Right cardiac atrium (tissue), 5 donors: ENCODE measurements at regions of chr13 and their contacts with region 1.

Region 1: DNA sequence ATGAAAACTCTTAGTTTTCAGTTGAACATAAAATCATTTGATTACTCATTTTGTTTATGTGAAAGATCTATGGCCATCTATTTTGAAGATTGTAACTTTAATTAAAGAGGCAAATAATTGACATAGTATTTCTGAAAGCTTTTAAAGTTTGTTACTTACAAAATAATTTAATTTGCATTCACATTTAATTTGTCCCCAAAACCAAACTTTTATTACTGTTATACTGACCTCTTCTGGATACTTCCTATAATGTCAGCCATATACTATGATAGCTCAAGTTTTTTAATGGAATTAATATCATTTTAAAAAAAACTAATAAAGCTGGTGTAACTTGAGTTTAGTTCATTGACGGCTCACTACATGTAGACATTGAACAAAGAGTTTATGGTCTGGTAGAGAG is 4.9 kb upstream of the SGCG start:
- DNase-seq: no peak
- ATAC-seq: no peak
- H3K4me3 ChIP-seq: no peak overlapping the region
- H3K27ac ChIP-seq: no peak overlapping the region
- H3K4me1 ChIP-seq: no peaks in the 10 kb centered on the region
- H3K27me3 ChIP-seq: no peaks in the 10 kb centered on the region

Region 2: GRCh38 chr13:22801402-22802003 is 374.4 kb before region 1 on chr13:
- intact Hi-C with region 1: loop called in 1 of 4 experiments (anchors 10 kb)
- DNase-seq: no peak
- ATAC-seq: no peak
- H3K4me3 ChIP-seq: no peak overlapping the region
- H3K27ac ChIP-seq: no peak overlapping the region
- H3K4me1 ChIP-seq: no peaks in the 10 kb centered on the region
- H3K27me3 ChIP-seq: no peaks in the 10 kb centered on the region

Region 3: GRCh38 chr13:23715762-23716235 is 539.9 kb after region 1 on chr13:
- intact Hi-C with region 1: no loop called
- DNase-seq: peak in 2 of 3 donors; percentile 65
- ATAC-seq: peak; percentile 47 to 66
- H3K4me3 ChIP-seq: no peak overlapping the region
- H3K27ac ChIP-seq: no peak overlapping the region
- H3K4me1 ChIP-seq: no peaks in the 10 kb centered on the region
- H3K27me3 ChIP-seq: no peaks in the 10 kb centered on the region